CD4-positive, alpha-beta T cell (primary cell): ENCODE measurements at regions of chr18 and their contacts with region 1.

Region 1: DNA sequence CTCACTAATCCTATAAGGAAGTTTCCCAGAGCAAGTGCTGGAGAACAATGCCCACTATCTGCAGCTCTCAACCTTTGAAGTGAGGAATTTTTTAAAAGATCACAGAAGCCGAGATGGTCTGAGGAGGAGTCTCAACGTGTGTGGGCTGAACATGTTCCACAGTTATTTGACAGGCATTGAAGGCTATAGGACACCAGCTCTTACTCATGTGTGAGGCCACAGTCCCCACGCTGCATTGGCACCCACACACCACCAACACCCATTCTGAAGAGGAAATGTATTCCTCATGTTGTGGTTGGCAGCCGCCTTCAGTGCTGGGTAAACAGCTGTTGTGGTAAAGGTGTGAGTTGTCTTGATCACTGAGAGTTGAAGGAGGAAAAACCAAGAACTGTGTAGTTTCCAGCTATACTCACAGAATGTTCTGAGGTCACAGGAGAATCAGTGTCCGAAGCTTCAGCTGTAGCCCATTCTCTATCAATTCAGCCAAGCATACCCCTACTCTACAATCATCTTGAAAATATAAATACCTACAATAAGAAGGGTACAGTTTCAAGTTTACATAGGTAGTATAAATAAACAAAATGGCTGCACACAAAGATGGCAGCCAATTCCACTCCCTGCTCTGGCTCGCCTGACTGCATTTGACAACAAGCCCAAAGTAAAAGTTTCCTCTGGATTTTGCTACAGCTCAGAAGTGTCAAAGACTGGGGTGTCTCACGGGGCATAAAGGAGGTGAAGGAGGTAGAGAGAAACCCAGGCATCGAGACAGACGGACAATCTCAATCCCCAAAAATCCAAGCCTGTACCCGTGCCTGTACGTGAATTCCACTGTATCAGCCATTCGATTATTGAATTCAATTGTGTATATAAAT is 12.1 kb downstream of the CD226 start:
- DNase-seq: peak; percentile 50 to 93 (median 76)
- ATAC-seq: peak; percentile 94
- H3K4me3 ChIP-seq: peak overlapping the region; percentile 29
- H3K4me3 Mint-ChIP-seq: no peak overlapping the region
- H3K27ac ChIP-seq: peak overlapping the region; percentile 51 to 62
- H3K27ac Mint-ChIP-seq: no peak overlapping the region
- H3K4me1 ChIP-seq: peaks cover 49% of the 10 kb centered on the region
- H3K4me1 Mint-ChIP-seq: peaks cover 2% of the 10 kb centered on the region
- H3K27me3 ChIP-seq: no peaks in the 10 kb centered on the region
- H3K27me3 Mint-ChIP-seq: no peaks in the 10 kb centered on the region
- CTCF ChIP-seq: no peak

Region 2: DNA sequence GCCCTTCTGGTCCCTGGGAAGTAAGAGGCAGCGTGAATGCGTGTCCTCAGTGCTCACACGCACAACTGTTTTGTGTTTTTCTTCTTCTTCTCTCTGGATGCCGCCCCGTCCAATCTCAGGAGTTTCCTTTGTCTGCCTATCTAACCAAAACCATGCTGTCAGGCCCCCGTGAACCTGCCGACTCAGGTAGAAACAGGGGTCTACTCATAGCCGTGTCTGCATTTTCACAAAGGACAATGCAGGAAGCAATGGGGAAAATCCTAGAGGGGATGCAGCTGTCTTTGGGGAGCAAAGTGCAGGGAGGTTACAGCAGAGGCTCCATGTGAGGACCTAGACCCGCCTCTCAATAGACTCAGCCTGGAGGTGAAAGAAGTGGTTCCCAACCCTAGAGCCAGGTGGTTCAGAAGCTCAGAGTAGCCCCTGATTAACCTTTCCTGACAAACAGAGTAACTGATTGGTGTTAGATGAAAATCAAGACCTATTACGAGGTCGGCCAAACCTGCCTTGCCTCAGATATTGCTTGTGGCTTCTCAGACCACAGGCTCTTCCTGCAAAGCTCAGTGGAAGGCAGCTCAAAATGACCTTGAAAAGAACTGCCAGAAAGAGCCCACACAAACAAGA is 37.2 kb before region 1 on chr18:
- CTCF ChIA-PET with region 1: interaction called, 5 read pairs
- POLR2A ChIA-PET with region 1: interaction called, 25 read pairs
- intact Hi-C with region 1: loop called in 1 of 2 experiments (anchors 5 kb)
- DNase-seq: peak in 6 of 14 experiments; percentile 11 to 63 (median 46)
- ATAC-seq: peak; percentile 53
- H3K4me3 ChIP-seq: peak overlapping the region; percentile 42
- H3K4me3 Mint-ChIP-seq: peak overlapping the region; percentile 83
- H3K27ac ChIP-seq: peak overlapping the region; percentile 34 to 70
- H3K27ac Mint-ChIP-seq: peak overlapping the region; percentile 86
- H3K4me1 ChIP-seq: peaks cover 36% of the 10 kb centered on the region
- H3K4me1 Mint-ChIP-seq: peaks cover 82% of the 10 kb centered on the region
- H3K27me3 ChIP-seq: no peaks in the 10 kb centered on the region
- H3K27me3 Mint-ChIP-seq: no peaks in the 10 kb centered on the region
- CTCF ChIP-seq: no peak

Region 3: GRCh38 chr18:69916412-69916811 is 19.1 kb before region 1 on chr18:
- CTCF ChIA-PET with region 1: interaction called, 6 read pairs
- POLR2A ChIA-PET with region 1: interaction called, 12 read pairs
- intact Hi-C with region 1: no loop called
- DNase-seq: no peak
- ATAC-seq: no peak
- H3K4me3 ChIP-seq: no peak overlapping the region
- H3K4me3 Mint-ChIP-seq: no peak overlapping the region
- H3K27ac ChIP-seq: no peak overlapping the region
- H3K27ac Mint-ChIP-seq: peak overlapping the region; percentile 61
- H3K4me1 ChIP-seq: peaks cover 21% of the 10 kb centered on the region
- H3K4me1 Mint-ChIP-seq: peaks cover 84% of the 10 kb centered on the region
- H3K27me3 ChIP-seq: no peaks in the 10 kb centered on the region
- H3K27me3 Mint-ChIP-seq: no peaks in the 10 kb centered on the region
- CTCF ChIP-seq: no peak

Region 4: GRCh38 chr18:69947361-69948133 is 12.0 kb after region 1 on chr18 and contains the start of gene CD226:
- CTCF ChIA-PET with region 1: interaction called, 4 read pairs
- POLR2A ChIA-PET with region 1: interaction called, 60 read pairs
- intact Hi-C with region 1: loop called in 1 of 2 experiments (anchors 1 kb)
- DNase-seq: peak in 6 of 14 experiments; percentile 17 to 78 (median 54)
- ATAC-seq: peak; percentile 75
- H3K4me3 ChIP-seq: peak within 1 kb of the TSS; percentile 57
- H3K4me3 Mint-ChIP-seq: no peak within 1 kb of the TSS
- H3K27ac ChIP-seq: peak within 1 kb of the TSS; percentile 58 to 70
- H3K27ac Mint-ChIP-seq: no peak within 1 kb of the TSS
- H3K4me1 ChIP-seq: peaks cover 66% of the 10 kb centered on the region
- H3K4me1 Mint-ChIP-seq: peaks cover 15% of the 10 kb centered on the region
- H3K27me3 ChIP-seq: no peaks in the 10 kb centered on the region
- H3K27me3 Mint-ChIP-seq: no peaks in the 10 kb centered on the region
- CTCF ChIP-seq: no peak
- total RNA-seq, gene CD226: 74.0 to 74.8 TPM

Region 5: DNA sequence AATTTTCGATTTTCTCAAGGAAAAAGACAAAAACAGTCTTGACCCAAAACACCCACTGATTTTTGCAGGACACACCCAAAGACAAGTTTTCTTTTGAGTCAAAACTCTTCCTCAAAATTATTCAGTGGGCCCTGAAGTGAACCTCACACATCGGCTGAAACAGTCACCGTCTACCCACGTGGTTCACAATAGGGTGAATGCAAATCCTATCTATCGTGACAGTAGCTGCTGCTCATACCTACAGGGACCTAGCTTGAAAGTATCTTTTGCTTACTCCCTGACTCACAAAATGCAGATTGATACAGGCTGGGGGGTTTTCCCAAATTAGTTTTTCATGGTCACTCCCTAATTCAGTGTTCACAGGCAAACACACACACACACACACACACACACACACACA is 22.9 kb after region 1 on chr18:
- CTCF ChIA-PET with region 1: interaction called, 23 read pairs
- POLR2A ChIA-PET with region 1: interaction called, 100 read pairs
- intact Hi-C with region 1: loop called (anchors 2 kb)
- DNase-seq: peak in 3 of 14 experiments; percentile 28 to 71 (median 66)
- ATAC-seq: no peak
- H3K4me3 ChIP-seq: no peak overlapping the region
- H3K4me3 Mint-ChIP-seq: no peak overlapping the region
- H3K27ac ChIP-seq: peak overlapping the region; percentile 25 to 75
- H3K27ac Mint-ChIP-seq: no peak overlapping the region
- H3K4me1 ChIP-seq: peaks cover 45% of the 10 kb centered on the region
- H3K4me1 Mint-ChIP-seq: peaks cover 16% of the 10 kb centered on the region
- H3K27me3 ChIP-seq: no peaks in the 10 kb centered on the region
- H3K27me3 Mint-ChIP-seq: no peaks in the 10 kb centered on the region
- CTCF ChIP-seq: no peak

Region 6: DNA sequence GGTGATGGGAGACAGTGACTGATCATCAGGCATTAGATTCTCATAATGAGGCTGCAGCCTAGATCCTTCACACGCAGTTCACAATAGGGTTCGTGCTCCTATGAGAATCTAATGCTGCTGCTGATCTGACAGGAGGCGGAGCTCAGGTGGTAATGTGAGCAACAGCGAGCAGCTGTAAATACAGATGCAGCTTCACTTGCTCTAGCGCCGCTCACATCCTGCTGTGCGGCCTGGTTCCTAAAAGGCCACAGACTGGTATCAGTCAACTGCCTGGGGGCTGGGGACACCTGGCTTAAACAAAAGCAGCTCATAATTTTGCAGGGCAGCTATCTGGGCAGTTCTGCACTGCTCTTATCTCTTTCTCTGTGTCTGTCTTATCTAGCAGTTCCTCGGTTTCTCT is 32.5 kb after region 1 on chr18:
- CTCF ChIA-PET with region 1: no interaction called
- POLR2A ChIA-PET with region 1: interaction called, 11 read pairs
- intact Hi-C with region 1: no loop called
- DNase-seq: peak in 12 of 14 experiments; percentile 26 to 64 (median 46)
- ATAC-seq: peak; percentile 97
- H3K4me3 ChIP-seq: no peak overlapping the region
- H3K4me3 Mint-ChIP-seq: peak overlapping the region; percentile 25
- H3K27ac ChIP-seq: no peak overlapping the region
- H3K27ac Mint-ChIP-seq: peak overlapping the region; percentile 90
- H3K4me1 ChIP-seq: peaks cover 19% of the 10 kb centered on the region
- H3K4me1 Mint-ChIP-seq: peaks cover 47% of the 10 kb centered on the region
- H3K27me3 ChIP-seq: no peaks in the 10 kb centered on the region
- H3K27me3 Mint-ChIP-seq: no peaks in the 10 kb centered on the region
- CTCF ChIP-seq: no peak